Left ventricle myocardium superior (tissue), 1 donor: ENCODE measurements at regions of chr1 and their contacts with region 1.

Region 1: DNA sequence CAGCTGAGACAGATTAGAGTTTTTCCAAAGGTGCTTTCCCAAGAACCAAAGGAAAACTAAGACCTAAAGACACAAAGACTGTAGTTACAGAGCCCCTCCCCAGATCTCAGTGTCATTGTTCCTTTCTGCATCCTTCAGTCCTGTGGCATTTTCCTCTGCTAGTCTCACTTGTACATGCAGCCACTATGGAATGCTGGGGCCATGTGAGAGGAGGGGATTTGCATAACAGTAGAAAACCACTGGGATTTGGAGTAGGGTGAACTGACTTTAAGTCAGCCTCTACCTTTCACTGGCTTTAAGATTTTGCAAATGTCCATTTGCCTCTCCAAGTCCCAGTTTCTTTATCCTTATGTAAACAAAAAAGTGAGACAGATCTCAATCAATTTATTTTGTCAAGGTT is 119.4 kb upstream of the F3 start:
- DNase-seq: no peak
- ATAC-seq: no peak

Region 2: GRCh38 chr1:94532077-94532476 is 128.9 kb before region 1 on chr1:
- intact Hi-C with region 1: loop called (anchors 10 kb)
- DNase-seq: no peak
- ATAC-seq: no peak

Region 3: DNA sequence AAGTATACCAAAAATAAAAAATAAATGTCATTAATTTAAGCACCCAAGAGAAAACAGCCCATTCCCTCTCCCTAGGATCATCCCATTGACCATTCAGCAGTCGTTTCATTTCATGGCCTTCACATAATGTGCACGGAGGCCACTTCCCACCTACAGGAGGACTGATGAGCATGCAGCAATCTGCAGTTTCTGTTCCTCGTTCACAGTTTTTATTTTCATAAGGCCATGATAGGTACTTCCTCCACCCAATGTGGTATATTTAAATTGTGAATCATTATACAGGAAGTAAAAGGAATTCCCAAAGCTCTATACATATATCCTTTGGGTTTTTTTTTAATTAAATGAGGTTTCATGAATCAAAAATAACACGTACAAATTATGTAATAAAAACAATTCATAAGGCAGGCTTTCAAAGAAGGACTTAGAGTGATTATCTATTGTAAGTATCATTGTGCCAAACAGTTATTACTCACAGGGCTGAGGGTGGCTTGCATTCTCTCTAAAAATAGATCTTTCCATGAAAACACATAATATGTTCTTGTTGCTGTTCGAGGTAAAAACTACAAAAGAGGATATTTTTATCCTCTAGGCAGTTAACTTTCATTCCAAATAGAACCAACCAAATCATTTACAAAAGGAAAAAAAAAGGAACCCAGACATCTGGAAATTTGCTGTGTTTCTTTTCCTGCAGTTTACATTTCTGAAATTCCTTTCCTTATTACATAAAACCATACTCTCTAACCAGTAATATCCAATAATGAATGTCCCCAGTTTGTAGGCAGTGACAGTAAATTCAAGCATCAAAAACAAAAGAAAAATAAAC is 131.7 kb after region 1 on chr1:
- intact Hi-C with region 1: loop called (anchors 10 kb)
- DNase-seq: no peak
- ATAC-seq: peak; percentile 76

Region 4: DNA sequence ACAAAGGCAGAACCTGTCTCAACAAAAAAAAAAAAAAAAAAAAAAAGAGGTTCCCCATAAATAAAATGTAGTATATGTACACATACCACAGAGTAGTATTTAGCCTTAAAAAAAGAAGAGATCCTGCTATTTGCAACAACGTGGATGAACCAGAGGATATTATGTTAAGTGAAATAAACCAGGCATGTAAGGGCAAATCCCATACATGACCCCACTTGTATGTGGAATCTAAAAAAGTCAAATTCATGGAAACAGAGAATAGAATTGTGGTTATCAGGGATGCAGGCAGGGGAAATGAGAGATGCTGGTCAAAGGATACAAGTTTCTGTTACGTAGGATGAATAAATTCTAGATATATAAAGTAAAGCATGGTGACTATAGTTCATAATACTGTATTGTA is 175.9 kb after region 1 on chr1:
- intact Hi-C with region 1: no loop called
- DNase-seq: no peak
- ATAC-seq: no peak